ENCODE measurements at regions of chr11 and their contacts with region 1.

Region 1: DNA sequence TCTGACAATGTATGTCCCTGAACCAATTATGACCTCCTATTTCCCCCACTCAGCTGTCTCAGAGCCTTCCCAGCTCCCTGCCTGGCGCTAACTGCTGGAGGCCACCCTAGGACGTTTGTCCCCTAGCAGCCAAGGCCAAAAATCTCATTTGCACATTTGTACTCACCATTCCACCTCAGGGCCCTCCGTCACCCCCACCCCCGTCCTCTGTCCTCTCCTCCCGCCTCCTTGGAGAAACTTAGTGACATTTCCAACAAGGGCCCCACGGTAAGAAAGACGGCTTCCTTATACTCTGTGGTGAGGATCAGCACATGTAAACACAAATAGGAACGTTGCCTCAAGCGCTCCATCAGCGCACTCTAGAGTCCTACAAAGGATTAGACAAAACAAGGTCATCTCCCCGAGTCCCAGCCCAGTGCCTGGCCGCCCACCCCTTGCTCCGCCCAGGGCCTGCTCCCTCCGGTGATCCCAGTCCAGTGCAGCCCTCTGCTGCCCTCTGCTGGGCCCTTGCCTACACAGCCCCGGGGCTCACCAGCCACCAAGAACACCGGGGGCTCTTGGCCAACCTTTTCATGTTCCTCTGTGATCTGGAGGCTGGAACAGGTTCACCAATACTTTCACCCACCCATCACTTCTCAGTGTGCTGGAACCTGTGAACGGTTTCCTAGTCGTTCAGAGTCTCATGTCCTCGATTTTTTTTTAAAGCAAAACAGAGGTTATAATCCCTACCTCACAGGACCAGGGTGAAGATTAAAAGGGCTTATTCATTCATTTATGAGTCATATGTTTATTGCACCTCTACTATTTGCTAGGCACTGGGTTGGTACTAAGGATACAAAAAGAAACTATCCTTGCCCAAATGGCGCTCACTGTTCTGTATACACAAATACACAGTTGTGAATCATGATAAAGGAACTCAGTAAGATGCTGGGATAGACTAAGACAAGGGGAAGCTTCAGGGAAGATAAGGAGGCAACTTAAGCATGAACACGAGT is 15.3 kb upstream of the CTR9 start:
- DNase-seq: peak; percentile 92
- H3K4me3 ChIP-seq: no peak overlapping the region
- H3K27ac ChIP-seq: peak overlapping the region; percentile 41
- H3K4me1 ChIP-seq: peaks cover 10% of the 10 kb centered on the region
- H3K27me3 ChIP-seq: no peaks in the 10 kb centered on the region
- CTCF ChIP-seq: peak; percentile 98
- POLR2A ChIP-seq: no peak

Region 2: GRCh38 chr11:9757809-9758636 is 977.8 kb before region 1 on chr11:
- CTCF ChIA-PET with region 1: interaction called, 3 read pairs
- POLR2A ChIA-PET with region 1: no interaction called
- dilution Hi-C with region 1: no loop called
- intact Hi-C with region 1: loop called (anchors 1 kb)
- DNase-seq: peak; percentile 77
- H3K4me3 ChIP-seq: peak overlapping the region in 2 of 3 experiments; percentile 33 to 37
- H3K27ac ChIP-seq: peak overlapping the region; percentile 67
- H3K4me1 ChIP-seq: peaks cover 34% of the 10 kb centered on the region
- H3K27me3 ChIP-seq: no peaks in the 10 kb centered on the region
- CTCF ChIP-seq: peak; percentile 67 to 92
- POLR2A ChIP-seq: peak; percentile 85

Region 3: DNA sequence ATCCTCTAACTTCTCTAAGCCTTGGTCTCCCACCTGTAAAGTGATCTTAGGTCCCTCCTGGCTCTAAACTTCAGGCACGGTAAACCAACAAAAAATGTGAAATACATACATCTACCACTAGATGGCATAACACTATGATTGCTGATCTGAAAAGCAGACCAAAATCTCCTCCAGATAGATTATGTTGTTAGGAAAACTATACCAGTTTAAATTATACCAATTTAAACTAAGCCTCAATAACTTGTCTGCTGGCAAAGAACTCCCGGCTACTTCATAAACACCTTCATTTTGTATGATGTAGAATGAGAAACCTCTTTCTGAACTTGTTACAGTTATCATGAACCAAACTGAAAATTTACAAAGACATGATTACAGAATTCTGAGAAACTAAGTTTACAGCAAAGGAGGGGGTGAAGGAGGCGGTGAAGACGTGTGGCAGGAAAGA is 527.6 kb before region 1 on chr11:
- CTCF ChIA-PET with region 1: interaction called, 3 read pairs
- POLR2A ChIA-PET with region 1: no interaction called
- dilution Hi-C with region 1: no loop called
- intact Hi-C with region 1: loop called (anchors 5 kb)
- DNase-seq: peak; percentile 73
- H3K4me3 ChIP-seq: no peak overlapping the region
- H3K27ac ChIP-seq: no peak overlapping the region
- H3K4me1 ChIP-seq: no peaks in the 10 kb centered on the region
- H3K27me3 ChIP-seq: no peaks in the 10 kb centered on the region
- CTCF ChIP-seq: peak; percentile 39 to 41
- POLR2A ChIP-seq: no peak

Region 4: GRCh38 chr11:10366568-10367370 is 369.0 kb before region 1 on chr11:
- CTCF ChIA-PET with region 1: interaction called, 11 read pairs
- POLR2A ChIA-PET with region 1: no interaction called
- dilution Hi-C with region 1: no loop called
- intact Hi-C with region 1: loop called (anchors 1 kb)
- DNase-seq: peak; percentile 94
- H3K4me3 ChIP-seq: no peak overlapping the region
- H3K27ac ChIP-seq: peak overlapping the region; percentile 21
- H3K4me1 ChIP-seq: peaks cover 6% of the 10 kb centered on the region
- H3K27me3 ChIP-seq: no peaks in the 10 kb centered on the region
- CTCF ChIP-seq: peak; percentile 85 to 91
- POLR2A ChIP-seq: no peak

Region 5: DNA sequence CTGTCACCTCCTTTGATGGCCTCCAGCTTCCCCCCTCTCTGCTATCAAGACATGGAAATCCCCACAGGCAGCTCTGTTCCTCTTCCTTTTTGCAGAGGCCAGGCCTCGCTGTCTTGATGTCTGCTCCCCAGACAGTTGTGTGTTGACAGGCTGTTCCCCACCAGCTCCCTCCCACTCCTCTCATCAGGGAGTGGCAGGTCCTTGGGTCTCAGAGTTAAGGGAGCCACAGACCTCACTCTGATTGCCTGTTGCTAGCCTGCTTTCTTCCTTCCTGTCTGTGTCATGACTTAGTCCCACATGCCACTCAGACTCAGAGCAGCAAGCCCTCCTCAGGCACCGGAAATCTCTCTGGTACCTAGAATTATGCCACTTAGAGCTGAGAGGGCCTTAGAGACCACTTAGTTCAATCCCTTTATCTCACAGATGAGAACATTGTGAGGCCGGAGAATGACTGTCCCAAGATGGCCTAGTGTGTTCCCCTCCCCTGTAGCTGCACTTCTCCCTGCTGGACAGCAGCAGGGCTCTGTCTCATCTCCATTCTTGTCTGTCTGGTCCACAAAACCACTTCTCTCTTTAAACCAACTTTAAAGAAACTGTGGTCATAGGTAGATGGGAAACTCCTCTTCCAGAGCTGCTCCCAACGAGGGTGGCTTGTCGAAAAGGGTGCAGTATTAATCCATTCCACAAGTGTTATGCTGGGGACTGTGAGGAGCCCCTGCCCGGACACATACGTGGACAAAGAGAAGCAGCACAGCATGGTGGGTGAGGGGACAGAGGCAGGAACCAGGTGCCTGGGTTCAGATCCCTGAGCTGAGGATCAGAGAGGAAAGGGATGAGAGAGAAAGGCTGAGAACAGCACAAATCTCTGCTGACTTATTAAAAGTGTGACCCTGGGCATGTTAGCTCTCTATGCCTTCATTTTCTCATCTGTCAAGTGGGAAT is 276.5 kb before region 1 on chr11:
- CTCF ChIA-PET with region 1: no interaction called
- POLR2A ChIA-PET with region 1: no interaction called
- dilution Hi-C with region 1: no loop called
- intact Hi-C with region 1: no loop called
- DNase-seq: no peak
- H3K4me3 ChIP-seq: no peak overlapping the region
- H3K27ac ChIP-seq: no peak overlapping the region
- H3K4me1 ChIP-seq: peaks cover 2% of the 10 kb centered on the region
- H3K27me3 ChIP-seq: peaks cover 0 to 2% of the 10 kb centered on the region in 2 experiments
- CTCF ChIP-seq: no peak
- POLR2A ChIP-seq: no peak

Region 6: DNA sequence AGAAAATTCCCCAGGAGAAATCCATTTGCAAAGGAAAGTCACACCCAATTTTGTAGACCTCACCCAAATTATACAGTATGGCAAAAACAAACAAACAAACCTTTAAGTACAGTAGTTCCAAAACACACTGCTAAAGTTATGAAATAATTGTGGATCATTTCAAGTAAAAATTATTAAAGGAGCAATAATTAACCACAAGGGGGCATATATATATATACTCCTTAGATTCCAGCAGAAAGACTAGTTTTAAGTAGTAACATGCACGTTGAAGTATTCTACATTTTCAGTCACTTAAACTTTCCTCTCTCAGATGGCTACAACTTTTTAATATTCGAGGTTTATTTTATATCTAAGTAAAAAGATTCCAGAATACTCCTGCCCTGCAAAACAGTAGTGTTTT is 221.6 kb before region 1 on chr11:
- CTCF ChIA-PET with region 1: interaction called, 27 read pairs
- POLR2A ChIA-PET with region 1: no interaction called
- dilution Hi-C with region 1: no loop called
- intact Hi-C with region 1: loop called (anchors 1 kb)
- DNase-seq: peak; percentile 52
- H3K4me3 ChIP-seq: no peak overlapping the region
- H3K27ac ChIP-seq: no peak overlapping the region
- H3K4me1 ChIP-seq: peaks cover 7% of the 10 kb centered on the region
- H3K27me3 ChIP-seq: no peaks in the 10 kb centered on the region
- CTCF ChIP-seq: peak; percentile 5 to 10
- POLR2A ChIP-seq: no peak

Region 7: DNA sequence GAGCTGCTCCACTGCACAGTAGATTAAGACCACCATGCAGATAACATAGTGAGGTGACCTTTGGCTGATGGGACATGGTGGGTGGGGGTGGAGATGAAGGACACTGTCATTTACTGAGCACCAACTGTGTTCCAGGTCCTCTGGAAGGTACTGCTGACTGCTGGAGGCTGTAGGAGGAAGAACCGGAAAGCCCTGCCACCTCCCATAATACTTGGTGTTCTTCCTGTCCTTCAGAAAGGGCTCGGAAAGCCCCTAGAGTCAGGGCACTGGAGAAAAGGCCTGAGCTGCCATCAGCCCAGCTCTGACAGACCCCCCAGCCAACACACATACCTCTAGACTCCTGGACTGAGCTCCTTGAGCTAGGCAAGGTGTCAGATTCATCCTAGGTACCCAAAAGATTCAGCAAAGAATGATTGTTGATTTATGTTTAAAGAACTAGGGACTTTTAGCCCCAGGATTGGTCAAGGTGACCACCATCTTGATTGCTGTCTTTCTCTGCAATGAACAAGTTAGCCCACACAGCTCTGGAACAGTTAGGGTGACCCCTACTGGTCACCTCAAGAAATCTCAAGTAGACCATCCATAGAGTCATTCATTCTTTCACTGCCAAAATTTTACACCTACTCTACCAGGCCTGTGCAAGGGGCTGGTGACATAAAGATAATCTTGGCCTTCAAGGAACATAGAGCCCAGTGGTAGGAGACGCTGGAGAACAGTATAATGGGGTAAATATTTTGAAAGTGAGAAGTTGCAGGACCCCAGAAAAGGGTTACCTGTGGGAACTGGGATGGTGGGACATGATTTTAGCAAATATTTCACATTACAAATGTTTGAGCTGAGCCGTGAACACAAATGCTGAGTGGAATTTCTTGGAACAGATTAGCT is 81.6 kb before region 1 on chr11:
- CTCF ChIA-PET with region 1: no interaction called
- POLR2A ChIA-PET with region 1: no interaction called
- dilution Hi-C with region 1: no loop called
- intact Hi-C with region 1: loop called (anchors 1 kb)
- DNase-seq: peak; percentile 73
- H3K4me3 ChIP-seq: no peak overlapping the region
- H3K27ac ChIP-seq: no peak overlapping the region
- H3K4me1 ChIP-seq: peaks cover 21% of the 10 kb centered on the region
- H3K27me3 ChIP-seq: no peaks in the 10 kb centered on the region
- CTCF ChIP-seq: peak; percentile 72 to 78
- POLR2A ChIP-seq: no peak

Measured in endothelial cell of umbilical vein (primary cell).